Activated CD4-positive, alpha-beta T cell treated with anti-CD3 and anti-CD28 coated beads, Interleukin-2, amount 10 ng/mL, durations not matched to agents 7 days and 5 days (primary cell): ENCODE measurements at regions of chr5 and their contacts with region 1.

Region 1: DNA sequence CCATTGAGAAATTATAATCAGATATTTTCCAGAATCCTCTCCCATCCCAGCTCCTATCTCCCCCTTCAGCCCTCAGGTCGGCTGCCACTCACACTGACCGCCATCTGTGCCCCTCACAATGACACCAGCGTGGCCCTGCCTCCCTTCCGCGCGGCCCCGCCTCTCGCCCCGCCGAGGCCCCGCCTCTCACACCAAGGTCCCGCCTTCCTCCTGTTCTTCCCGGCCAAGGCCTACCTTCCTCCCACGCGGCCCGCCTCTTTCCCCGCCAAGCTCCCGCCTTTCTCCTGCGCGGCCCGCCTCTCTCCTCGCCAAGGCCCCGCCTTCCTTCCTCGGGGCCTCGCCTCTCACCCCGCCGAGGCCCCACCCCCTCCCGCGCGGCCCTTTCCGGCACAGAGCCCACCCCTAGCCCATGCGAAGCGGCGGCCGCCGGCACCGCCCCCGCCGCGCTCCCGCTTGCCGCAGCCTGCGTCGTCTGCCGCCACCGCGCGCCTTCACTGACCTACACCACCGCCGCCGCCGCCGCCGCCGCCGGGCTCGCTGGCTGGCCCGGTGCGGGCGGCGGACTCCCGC is at the start of gene DNAJC21:
- DNase-seq: peak; percentile 96
- H3K4me3 Mint-ChIP-seq: peak within 1 kb of the TSS; percentile 98
- H3K27ac Mint-ChIP-seq: peak within 1 kb of the TSS; percentile 96
- H3K4me1 Mint-ChIP-seq: peaks cover 40% of the 10 kb centered on the region
- H3K27me3 Mint-ChIP-seq: no peaks in the 10 kb centered on the region
- total RNA-seq, gene DNAJC21: 52.4 to 57.6 TPM

Region 2: GRCh38 chr5:34915139-34915855 is 13.9 kb before region 1 on chr5 and contains the starts of genes BRIX1 and RAD1:
- CTCF ChIA-PET with region 1: interaction called, 21 read pairs
- POLR2A ChIA-PET with region 1: interaction called, 10 read pairs
- DNase-seq: peak; percentile 96
- H3K4me3 Mint-ChIP-seq: no peak within 1 kb of the TSS
- H3K27ac Mint-ChIP-seq: no peak within 1 kb of the TSS
- H3K4me1 Mint-ChIP-seq: peaks cover 38% of the 10 kb centered on the region
- H3K27me3 Mint-ChIP-seq: no peaks in the 10 kb centered on the region
- total RNA-seq, gene BRIX1: 33.3 to 50.5 TPM
- total RNA-seq, gene RAD1: 25.6 to 26.5 TPM

Region 3: GRCh38 chr5:34970552-34970951 is 41.3 kb after region 1 on chr5:
- CTCF ChIA-PET with region 1: no interaction called
- POLR2A ChIA-PET with region 1: no interaction called
- DNase-seq: no peak
- H3K4me3 Mint-ChIP-seq: no peak overlapping the region
- H3K27ac Mint-ChIP-seq: no peak overlapping the region
- H3K4me1 Mint-ChIP-seq: no peaks in the 10 kb centered on the region
- H3K27me3 Mint-ChIP-seq: no peaks in the 10 kb centered on the region